Activated naive CD4-positive, alpha-beta T cell treated with anti-CD3 and anti-CD28 coated beads for 36 hours (primary cell): ENCODE measurements at regions of chr3 and their contacts with region 1.

Region 1: DNA sequence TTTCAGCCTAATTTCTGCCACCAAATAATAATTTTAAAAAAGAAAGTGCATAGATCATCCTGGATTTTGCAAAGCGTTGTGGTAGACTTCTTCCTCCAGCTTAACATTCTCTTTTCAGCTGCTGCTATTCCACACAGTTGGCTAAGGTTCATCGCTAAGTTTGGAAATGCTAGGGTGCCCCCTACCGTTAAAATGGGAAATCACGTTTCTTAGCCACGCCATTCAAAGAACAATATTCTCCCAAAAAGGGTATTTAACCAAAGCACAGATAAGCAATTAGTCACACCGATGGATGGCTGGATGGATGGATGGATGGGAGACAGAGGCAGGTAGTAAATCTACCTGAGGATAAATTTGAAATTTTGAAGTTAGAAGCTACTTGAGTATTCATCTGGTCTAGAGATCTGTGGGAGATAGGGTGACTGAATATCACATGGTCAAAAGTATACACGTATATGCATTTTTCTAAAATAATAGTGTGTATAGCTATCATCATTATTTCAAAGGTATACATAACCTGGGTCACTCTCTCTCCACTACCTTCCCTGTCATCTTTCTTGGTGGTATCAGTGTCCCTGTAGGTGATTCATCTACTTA is 67.2 kb downstream of the EFHB start:
- DNase-seq: peak; percentile 53
- H3K4me3 Mint-ChIP-seq: no peak overlapping the region
- H3K27ac Mint-ChIP-seq: no peak overlapping the region
- H3K4me1 Mint-ChIP-seq: no peaks in the 10 kb centered on the region
- H3K27me3 Mint-ChIP-seq: peaks cover 5% of the 10 kb centered on the region

Region 2: DNA sequence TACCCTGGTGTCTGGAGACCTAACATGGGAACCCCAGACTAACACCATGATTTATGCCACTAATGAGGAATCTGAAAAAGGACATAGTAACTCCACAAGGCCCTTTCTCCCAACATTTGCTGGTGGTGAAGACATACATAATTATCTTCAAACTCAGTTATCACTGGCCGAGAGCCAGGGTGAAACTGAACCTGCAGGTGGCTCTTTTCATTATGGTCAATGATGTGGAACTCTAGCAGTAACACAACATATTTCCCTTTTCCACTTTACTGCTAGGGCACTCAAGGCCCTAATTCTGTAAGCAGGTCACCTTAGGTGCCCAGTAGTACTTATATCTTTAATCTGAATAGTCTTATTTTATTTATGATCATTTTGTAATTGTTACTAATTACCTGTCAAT is 1115.3 kb before region 1 on chr3:
- CTCF ChIA-PET with region 1: no interaction called
- intact Hi-C with region 1: loop called (anchors 5 kb)
- DNase-seq: no peak
- H3K4me3 Mint-ChIP-seq: no peak overlapping the region
- H3K27ac Mint-ChIP-seq: no peak overlapping the region
- H3K4me1 Mint-ChIP-seq: peaks cover 76% of the 10 kb centered on the region
- H3K27me3 Mint-ChIP-seq: no peaks in the 10 kb centered on the region

Region 3: GRCh38 chr3:19046440-19046839 is 820.4 kb before region 1 on chr3:
- CTCF ChIA-PET with region 1: interaction called, 3 read pairs
- intact Hi-C with region 1: loop called (anchors 1 kb)
- DNase-seq: no peak
- H3K4me3 Mint-ChIP-seq: no peak overlapping the region
- H3K27ac Mint-ChIP-seq: no peak overlapping the region
- H3K4me1 Mint-ChIP-seq: no peaks in the 10 kb centered on the region
- H3K27me3 Mint-ChIP-seq: no peaks in the 10 kb centered on the region

Region 4: GRCh38 chr3:19065027-19065426 is 801.8 kb before region 1 on chr3:
- CTCF ChIA-PET with region 1: interaction called, 5 read pairs
- intact Hi-C with region 1: loop called (anchors 1 kb)
- DNase-seq: no peak
- H3K4me3 Mint-ChIP-seq: no peak overlapping the region
- H3K27ac Mint-ChIP-seq: no peak overlapping the region
- H3K4me1 Mint-ChIP-seq: no peaks in the 10 kb centered on the region
- H3K27me3 Mint-ChIP-seq: peaks cover 2% of the 10 kb centered on the region

Region 5: DNA sequence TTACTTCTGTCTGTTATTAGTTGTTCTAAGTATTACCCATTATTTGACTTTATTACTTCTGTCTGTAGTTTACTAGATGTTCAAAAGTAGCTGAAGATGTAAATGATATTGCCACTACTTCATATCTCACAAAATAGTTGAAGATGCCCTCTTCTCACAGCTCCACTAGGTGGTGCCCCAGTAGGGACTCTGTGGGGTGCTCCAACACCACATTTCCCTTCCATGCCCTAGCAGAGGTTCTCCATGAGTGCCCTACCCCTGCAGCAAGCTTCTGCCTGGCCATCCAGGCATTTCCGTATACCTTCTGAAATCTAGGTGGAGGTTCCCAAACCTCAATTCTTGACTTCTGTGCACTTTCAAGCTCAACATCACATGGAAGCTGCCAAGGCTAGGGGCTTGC is 637.8 kb before region 1 on chr3:
- CTCF ChIA-PET with region 1: no interaction called
- intact Hi-C with region 1: loop called (anchors 10 kb)
- DNase-seq: no peak
- H3K4me3 Mint-ChIP-seq: no peak overlapping the region
- H3K27ac Mint-ChIP-seq: no peak overlapping the region
- H3K4me1 Mint-ChIP-seq: peaks cover 3% of the 10 kb centered on the region
- H3K27me3 Mint-ChIP-seq: peaks cover 3% of the 10 kb centered on the region

Region 6: DNA sequence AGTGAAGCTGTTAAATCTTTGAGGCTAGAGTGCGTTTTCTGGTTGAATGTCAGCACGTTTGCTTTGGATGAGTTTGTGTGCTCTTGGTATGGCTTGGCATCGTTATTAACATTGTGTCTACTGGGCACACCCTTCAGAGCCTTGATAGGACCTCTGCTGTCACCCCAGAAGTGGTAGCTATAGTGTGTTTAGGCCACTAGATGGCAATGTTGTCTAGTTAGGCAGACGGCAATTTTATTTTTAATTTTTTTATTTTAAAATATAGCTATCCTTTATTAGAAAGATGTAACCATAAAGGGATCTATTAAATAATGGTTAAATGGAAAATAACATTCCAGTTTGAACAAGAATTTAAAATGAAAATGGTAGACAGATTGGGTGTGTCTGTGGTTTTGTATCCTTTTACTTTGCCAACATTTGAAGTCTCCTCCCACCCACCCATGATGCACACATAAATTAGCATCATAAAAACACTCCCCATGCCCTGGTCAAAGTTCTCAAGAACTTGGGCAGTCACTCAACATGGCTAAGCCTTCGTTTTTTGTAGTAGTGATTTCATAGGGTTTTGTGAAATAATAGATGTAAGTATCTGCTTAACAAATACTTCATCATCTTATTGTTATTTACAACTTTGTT is 517.8 kb before region 1 on chr3:
- CTCF ChIA-PET with region 1: interaction called, 44 read pairs
- intact Hi-C with region 1: loop called (anchors 1 kb)
- DNase-seq: peak; percentile 22
- H3K4me3 Mint-ChIP-seq: no peak overlapping the region
- H3K27ac Mint-ChIP-seq: no peak overlapping the region
- H3K4me1 Mint-ChIP-seq: no peaks in the 10 kb centered on the region
- H3K27me3 Mint-ChIP-seq: peaks cover 6% of the 10 kb centered on the region

Region 7: GRCh38 chr3:19543212-19543841 is 323.5 kb before region 1 on chr3:
- CTCF ChIA-PET with region 1: interaction called, 4 read pairs
- intact Hi-C with region 1: loop called (anchors 10 kb)
- DNase-seq: no peak
- H3K4me3 Mint-ChIP-seq: no peak overlapping the region
- H3K27ac Mint-ChIP-seq: no peak overlapping the region
- H3K4me1 Mint-ChIP-seq: no peaks in the 10 kb centered on the region
- H3K27me3 Mint-ChIP-seq: no peaks in the 10 kb centered on the region